ENCODE measurements at regions of chr15 and their contacts with region 1.

Region 1: GRCh38 chr15:60548101-60548500 is 69.2 kb upstream of the ICE2 start:
- DNase-seq: peak; percentile 54
- H3K4me3 Mint-ChIP-seq: peak overlapping the region; percentile 51
- H3K27ac Mint-ChIP-seq: peak overlapping the region; percentile 93
- H3K4me1 Mint-ChIP-seq: peaks cover 96% of the 10 kb centered on the region
- H3K27me3 Mint-ChIP-seq: no peaks in the 10 kb centered on the region

Region 2: GRCh38 chr15:60362321-60363086 is 185.6 kb before region 1 on chr15:
- intact Hi-C with region 1: loop called (anchors 1 kb)
- DNase-seq: peak; percentile 49
- H3K4me3 Mint-ChIP-seq: peak overlapping the region; percentile 13
- H3K27ac Mint-ChIP-seq: peak overlapping the region; percentile 82
- H3K4me1 Mint-ChIP-seq: peaks cover 36% of the 10 kb centered on the region
- H3K27me3 Mint-ChIP-seq: no peaks in the 10 kb centered on the region

Region 3: DNA sequence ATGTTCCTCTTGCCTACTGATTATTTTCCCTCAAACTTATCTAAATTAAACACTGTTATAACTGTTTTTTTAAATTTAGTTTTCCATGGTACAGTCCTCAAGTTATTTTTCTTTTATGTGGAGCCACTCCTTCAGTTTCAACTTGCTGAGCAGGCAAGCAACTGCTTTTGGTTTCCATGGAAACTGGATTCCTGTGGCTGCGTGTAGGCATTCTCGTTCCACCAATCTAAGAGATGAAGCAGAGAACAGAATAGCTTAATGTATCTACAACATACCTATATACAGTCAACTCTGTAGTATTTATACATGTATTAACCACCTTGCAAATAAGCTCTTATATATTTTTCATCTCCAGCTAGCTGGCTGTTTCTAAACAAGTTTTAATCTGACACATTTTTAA is 124.6 kb before region 1 on chr15:
- intact Hi-C with region 1: loop called (anchors 1 kb)
- DNase-seq: no peak
- H3K4me3 Mint-ChIP-seq: no peak overlapping the region
- H3K27ac Mint-ChIP-seq: peak overlapping the region; percentile 11
- H3K4me1 Mint-ChIP-seq: peaks cover 12% of the 10 kb centered on the region
- H3K27me3 Mint-ChIP-seq: no peaks in the 10 kb centered on the region

Region 4: GRCh38 chr15:60507596-60508424 is 40.3 kb before region 1 on chr15:
- intact Hi-C with region 1: loop called (anchors 2 kb)
- DNase-seq: peak; percentile 51
- H3K4me3 Mint-ChIP-seq: no peak overlapping the region
- H3K27ac Mint-ChIP-seq: peak overlapping the region; percentile 65
- H3K4me1 Mint-ChIP-seq: peaks cover 58% of the 10 kb centered on the region
- H3K27me3 Mint-ChIP-seq: no peaks in the 10 kb centered on the region

Region 5: GRCh38 chr15:60563539-60564404 is 15.7 kb after region 1 on chr15:
- intact Hi-C with region 1: no loop called
- DNase-seq: peak; percentile 32
- H3K4me3 Mint-ChIP-seq: peak overlapping the region; percentile 45
- H3K27ac Mint-ChIP-seq: peak overlapping the region; percentile 73
- H3K4me1 Mint-ChIP-seq: peaks cover 67% of the 10 kb centered on the region
- H3K27me3 Mint-ChIP-seq: no peaks in the 10 kb centered on the region

Region 6: GRCh38 chr15:60574801-60575631 is 26.9 kb after region 1 on chr15:
- intact Hi-C with region 1: loop called (anchors 1 kb)
- DNase-seq: no peak
- H3K4me3 Mint-ChIP-seq: peak overlapping the region; percentile 79
- H3K27ac Mint-ChIP-seq: peak overlapping the region; percentile 99
- H3K4me1 Mint-ChIP-seq: peaks cover 80% of the 10 kb centered on the region
- H3K27me3 Mint-ChIP-seq: no peaks in the 10 kb centered on the region

Region 7: DNA sequence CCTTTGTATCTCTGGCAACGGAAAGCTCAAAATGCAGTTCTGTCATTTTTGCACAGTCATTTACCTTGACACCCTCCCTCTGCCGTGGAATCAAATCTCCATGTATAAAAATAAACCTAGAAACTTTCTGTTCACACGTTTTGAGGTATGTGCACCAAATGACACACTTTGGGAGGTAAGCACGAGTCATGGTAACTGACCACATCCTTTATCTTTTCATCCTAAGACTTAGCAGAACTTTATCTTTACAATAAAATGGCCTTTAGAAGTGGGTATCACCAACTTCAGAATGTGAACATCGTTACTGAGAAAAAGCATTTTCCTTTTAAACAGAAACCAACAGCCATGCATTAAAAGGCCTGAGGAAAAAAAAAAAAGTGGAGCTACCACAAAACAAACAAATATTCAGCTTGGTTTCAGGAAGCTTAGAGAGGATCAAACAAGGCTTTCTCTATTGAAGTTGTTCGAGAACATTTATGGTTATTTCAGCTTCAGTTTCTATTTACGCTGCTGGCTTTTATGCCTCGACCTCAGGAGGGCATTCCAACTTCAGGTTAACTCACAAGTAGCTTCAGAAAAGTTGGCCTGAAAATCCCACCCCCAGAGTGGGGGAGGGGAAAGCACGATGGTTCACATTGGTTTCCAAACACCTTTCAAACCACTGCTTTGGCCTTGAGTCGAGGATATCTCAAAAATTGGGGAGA is 101.9 kb after region 1 on chr15:
- intact Hi-C with region 1: loop called (anchors 1 kb)
- DNase-seq: peak; percentile 46
- H3K4me3 Mint-ChIP-seq: peak overlapping the region; percentile 70
- H3K27ac Mint-ChIP-seq: peak overlapping the region; percentile 89
- H3K4me1 Mint-ChIP-seq: peaks cover 69% of the 10 kb centered on the region
- H3K27me3 Mint-ChIP-seq: peaks cover under 1% of the 10 kb centered on the region

Region 8: DNA sequence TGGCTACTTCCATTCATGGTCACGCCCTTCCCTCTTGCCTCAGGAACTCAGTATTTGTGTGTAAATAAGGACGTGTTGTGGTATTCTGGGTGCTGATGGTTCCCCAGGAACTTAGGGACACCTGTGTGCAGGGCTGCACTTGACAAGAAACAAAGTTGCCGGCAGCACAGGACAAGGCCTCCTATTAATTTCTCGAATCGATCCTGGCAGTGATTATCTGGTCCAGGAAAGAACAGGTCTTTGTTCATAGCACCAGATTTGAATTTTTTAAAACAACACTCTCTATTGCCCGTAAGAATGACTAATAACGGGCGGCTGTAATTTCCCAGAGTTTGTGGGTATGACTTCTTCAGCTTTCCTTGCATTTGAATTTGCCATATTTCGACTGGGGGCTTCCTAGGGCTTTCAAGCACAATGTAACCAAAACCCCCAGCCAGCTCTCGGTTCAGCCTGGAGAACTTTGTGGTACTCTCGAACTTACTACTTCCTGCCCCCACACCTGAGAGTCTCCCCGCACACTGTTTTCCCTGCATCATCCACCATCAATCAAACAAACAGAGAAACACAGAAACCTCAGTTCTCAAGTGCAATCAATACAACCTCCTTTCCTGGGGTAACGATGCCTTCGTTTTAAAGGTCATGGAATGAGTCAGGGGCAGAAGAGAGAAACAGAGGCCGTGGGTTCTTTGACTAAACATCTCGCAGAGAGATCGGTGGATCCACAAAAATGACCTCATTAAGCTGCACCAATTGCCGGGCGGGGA is 172.6 kb after region 1 on chr15:
- intact Hi-C with region 1: loop called (anchors 2 kb)
- DNase-seq: peak; percentile 56
- H3K4me3 Mint-ChIP-seq: peak overlapping the region; percentile 59
- H3K27ac Mint-ChIP-seq: peak overlapping the region; percentile 88
- H3K4me1 Mint-ChIP-seq: peaks cover 80% of the 10 kb centered on the region
- H3K27me3 Mint-ChIP-seq: no peaks in the 10 kb centered on the region